CD8-positive, alpha-beta memory T cell (primary cell): ENCODE measurements at regions of chr12 and their contacts with region 1.

Region 1: DNA sequence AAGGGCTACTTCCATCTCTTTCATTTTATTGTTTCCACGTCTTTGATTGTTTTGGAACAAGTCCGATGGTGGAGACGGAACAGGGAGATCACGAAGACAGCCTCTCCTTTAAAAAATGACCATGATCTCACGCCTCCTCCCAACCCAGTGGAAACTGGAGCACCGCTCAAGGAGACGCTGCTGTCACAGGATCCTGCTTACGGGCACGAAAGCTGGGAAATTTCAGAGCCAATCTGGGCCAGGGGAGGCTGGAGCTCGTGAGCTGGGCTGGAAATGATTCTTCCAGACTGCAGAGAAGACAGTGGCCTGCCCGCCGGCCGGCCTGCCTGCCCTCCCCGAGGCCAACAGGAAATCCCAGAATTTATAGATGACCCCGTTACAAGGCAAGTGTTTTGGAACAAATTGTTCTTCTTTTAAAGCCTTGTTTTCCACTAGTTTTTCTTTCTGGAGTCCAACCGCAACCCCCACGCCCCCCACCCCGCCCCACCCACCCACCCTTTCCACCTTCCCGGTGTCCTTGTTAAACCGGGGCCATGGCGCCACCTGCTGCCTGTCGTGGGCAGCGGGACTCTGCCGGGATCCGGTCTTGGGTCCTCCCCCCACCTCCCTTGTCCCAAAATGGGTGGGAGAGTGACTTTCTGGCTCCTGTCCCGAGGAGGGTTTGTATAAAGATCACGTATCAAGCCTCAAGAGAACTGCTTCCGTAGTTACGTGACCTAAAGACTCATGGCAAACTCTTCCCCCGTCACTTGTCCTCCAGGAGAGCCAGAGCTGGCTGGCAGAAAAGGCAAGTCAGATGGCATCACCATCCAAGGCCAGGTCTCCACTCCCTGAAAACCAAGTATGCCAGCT is 40.3 kb downstream of the MAP1LC3B2 start:
- DNase-seq: peak; percentile 19 to 61 (median 26)
- H3K4me3 ChIP-seq: no peak overlapping the region
- H3K4me3 Mint-ChIP-seq: no peak overlapping the region
- H3K27ac ChIP-seq: peak overlapping the region; percentile 10
- H3K27ac Mint-ChIP-seq: peak overlapping the region in 1 of 8 donors; percentile 51
- H3K4me1 ChIP-seq: peaks cover 18% of the 10 kb centered on the region
- H3K4me1 Mint-ChIP-seq: peaks cover 4 to 13% (median 13%) of the 10 kb centered on the region in 3 donors
- H3K27me3 ChIP-seq: no peaks in the 10 kb centered on the region
- H3K27me3 Mint-ChIP-seq: peaks cover 0 to 2% of the 10 kb centered on the region in 2 donors

Region 2: DNA sequence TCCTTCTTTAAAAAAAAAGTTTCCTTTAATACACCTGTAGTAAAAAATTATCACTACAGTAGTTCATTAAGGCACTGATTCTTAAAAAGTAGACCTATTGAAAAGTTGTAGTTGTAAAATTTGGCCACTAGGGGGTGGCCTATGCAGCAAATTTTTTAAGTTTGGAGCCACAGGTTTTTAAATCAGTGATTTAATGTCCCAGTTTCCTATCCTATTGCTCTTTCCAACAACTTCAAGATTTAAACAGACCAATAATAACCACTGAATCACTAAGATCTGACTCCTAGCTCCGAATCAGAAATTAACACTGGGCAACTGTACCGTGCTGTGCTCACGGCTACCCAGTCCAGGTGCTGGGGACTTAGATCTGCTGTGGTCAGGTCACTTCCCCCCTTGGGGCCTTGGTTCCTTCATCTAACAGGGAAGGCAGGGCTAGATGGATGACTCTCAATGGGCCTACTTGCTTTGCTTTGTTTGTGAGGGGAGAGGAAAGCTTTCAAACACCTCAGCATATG is 601.3 kb before region 1 on chr12:
- CTCF ChIA-PET with region 1: interaction called, 11 read pairs
- POLR2A ChIA-PET with region 1: no interaction called
- DNase-seq: peak in 2 of 5 donors; percentile 12 to 31
- H3K4me3 ChIP-seq: no peak overlapping the region
- H3K4me3 Mint-ChIP-seq: no peak overlapping the region
- H3K27ac ChIP-seq: no peak overlapping the region
- H3K27ac Mint-ChIP-seq: peak overlapping the region in 1 of 8 donors; percentile 4
- H3K4me1 ChIP-seq: no peaks in the 10 kb centered on the region
- H3K4me1 Mint-ChIP-seq: peaks cover 0 to 7% (median 0%) of the 10 kb centered on the region in 3 donors
- H3K27me3 ChIP-seq: no peaks in the 10 kb centered on the region
- H3K27me3 Mint-ChIP-seq: no peaks in the 10 kb centered on the region

Region 3: DNA sequence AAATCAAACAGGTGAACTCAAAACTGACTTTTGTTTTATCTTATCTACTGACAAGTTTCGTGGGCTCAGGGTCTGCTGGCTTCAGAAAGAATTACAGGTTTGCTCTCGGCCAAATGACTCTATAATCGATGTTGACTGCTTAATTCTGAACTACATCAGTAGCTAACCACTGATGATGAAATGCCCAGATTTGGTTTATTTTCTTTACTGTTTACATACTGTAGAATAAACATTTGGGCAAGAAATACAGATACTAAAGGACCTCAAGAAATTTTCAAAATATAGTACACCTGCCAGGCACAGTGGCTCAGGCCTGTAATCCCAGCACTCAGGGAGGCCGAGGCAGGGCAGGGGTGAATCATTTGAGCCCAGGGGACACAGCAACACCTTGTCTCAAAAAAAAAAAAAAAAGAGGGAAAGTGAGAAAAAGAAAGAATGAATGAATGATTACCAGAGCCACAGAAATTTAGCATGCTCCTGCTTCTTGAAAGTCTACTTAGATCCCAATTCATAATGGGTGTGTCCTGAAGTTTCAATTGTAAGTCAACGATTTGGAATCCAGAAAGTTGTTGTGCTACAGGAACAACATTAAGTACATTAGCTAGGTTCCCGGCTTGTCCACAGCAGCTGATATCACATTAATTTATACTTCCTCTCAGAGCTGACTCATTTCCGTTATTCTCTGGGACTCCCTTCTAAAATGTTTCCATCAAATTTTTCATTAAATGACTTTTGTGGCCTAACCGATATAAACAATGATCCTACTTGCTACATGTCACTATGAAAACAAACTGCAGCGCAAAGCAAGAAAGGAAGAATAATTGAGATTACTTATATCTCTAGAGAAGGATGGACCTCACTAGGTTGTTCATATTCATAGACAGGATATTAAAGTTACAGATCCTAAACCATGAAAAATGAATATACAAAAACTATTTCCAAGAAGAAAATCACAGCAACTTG is 456.3 kb before region 1 on chr12:
- CTCF ChIA-PET with region 1: interaction called, 15 read pairs
- POLR2A ChIA-PET with region 1: no interaction called
- DNase-seq: no peak
- H3K4me3 ChIP-seq: no peak overlapping the region
- H3K4me3 Mint-ChIP-seq: peak overlapping the region in 6 of 7 donors; percentile 9 to 72 (median 56)
- H3K27ac ChIP-seq: no peak overlapping the region
- H3K27ac Mint-ChIP-seq: peak overlapping the region in 6 of 8 donors; percentile 7 to 80 (median 60)
- H3K4me1 ChIP-seq: peaks cover 26% of the 10 kb centered on the region
- H3K4me1 Mint-ChIP-seq: peaks cover 47 to 53% (median 52%) of the 10 kb centered on the region in 3 donors
- H3K27me3 ChIP-seq: no peaks in the 10 kb centered on the region
- H3K27me3 Mint-ChIP-seq: no peaks in the 10 kb centered on the region